Calu3 (cell line): ENCODE measurements at regions of chr10 and their contacts with region 1.

Region 1: DNA sequence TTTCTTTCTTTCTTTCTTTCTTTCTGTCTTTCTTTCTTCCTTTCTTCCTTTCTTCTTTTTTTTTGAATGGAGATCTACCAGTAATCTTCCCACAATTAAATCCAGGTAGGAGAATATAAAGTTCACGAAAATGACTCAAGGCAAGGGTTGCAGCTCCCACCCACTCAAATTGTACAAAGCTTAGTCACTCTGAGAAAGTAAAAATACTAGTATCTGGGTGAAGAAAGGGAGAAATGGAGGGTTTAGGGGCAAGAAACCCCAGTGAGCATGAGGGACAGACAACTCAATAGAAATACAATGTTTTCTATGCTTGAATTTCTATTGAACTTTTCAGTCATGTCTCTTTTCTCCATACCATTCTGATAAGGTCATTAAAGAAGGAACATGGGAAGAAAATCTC is 200.8 kb downstream of the GATA3 start:
- DNase-seq: no peak
- H3K4me3 Mint-ChIP-seq: no peak overlapping the region
- H3K27ac Mint-ChIP-seq: no peak overlapping the region
- H3K4me1 Mint-ChIP-seq: peaks cover 26% of the 10 kb centered on the region
- H3K27me3 Mint-ChIP-seq: no peaks in the 10 kb centered on the region
- CTCF ChIP-seq: no peak

Region 2: DNA sequence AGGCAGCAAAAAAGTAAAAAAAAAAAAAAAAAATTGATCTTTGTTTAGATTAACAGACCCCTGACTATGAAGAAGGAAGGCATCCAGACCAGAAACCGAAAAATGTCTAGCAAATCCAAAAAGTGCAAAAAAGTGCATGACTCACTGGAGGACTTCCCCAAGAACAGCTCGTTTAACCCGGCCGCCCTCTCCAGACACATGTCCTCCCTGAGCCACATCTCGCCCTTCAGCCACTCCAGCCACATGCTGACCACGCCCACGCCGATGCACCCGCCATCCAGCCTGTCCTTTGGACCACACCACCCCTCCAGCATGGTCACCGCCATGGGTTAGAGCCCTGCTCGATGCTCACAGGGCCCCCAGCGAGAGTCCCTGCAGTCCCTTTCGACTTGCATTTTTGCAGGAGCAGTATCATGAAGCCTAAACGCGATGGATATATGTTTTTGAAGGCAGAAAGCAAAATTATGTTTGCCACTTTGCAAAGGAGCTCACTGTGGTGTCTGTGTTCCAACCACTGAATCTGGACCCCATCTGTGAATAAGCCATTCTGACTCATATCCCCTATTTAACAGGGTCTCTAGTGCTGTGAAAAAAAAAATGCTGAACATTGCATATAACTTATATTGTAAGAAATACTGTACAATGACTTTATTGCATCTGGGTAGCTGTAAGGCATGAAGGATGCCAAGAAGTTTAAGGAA is 181.5 kb before region 1 on chr10:
- CTCF ChIA-PET with region 1: no interaction called
- intact Hi-C with region 1: no loop called
- DNase-seq: no peak
- H3K4me3 Mint-ChIP-seq: no peak overlapping the region
- H3K27ac Mint-ChIP-seq: no peak overlapping the region
- H3K4me1 Mint-ChIP-seq: no peaks in the 10 kb centered on the region
- H3K27me3 Mint-ChIP-seq: no peaks in the 10 kb centered on the region
- CTCF ChIP-seq: no peak

Region 3: GRCh38 chr10:8269976-8270375 is 14.7 kb after region 1 on chr10:
- CTCF ChIA-PET with region 1: interaction called, 14 read pairs
- intact Hi-C with region 1: no loop called
- DNase-seq: no peak
- H3K4me3 Mint-ChIP-seq: no peak overlapping the region
- H3K27ac Mint-ChIP-seq: no peak overlapping the region
- H3K4me1 Mint-ChIP-seq: no peaks in the 10 kb centered on the region
- H3K27me3 Mint-ChIP-seq: no peaks in the 10 kb centered on the region
- CTCF ChIP-seq: no peak

Region 4: GRCh38 chr10:8282340-8282739 is 27.0 kb after region 1 on chr10:
- CTCF ChIA-PET with region 1: no interaction called
- intact Hi-C with region 1: no loop called
- DNase-seq: no peak
- H3K4me3 Mint-ChIP-seq: no peak overlapping the region
- H3K27ac Mint-ChIP-seq: no peak overlapping the region
- H3K4me1 Mint-ChIP-seq: peaks cover 11% of the 10 kb centered on the region
- H3K27me3 Mint-ChIP-seq: no peaks in the 10 kb centered on the region
- CTCF ChIP-seq: no peak

Region 5: GRCh38 chr10:8312781-8313180 is 57.5 kb after region 1 on chr10:
- CTCF ChIA-PET with region 1: no interaction called
- intact Hi-C with region 1: no loop called
- DNase-seq: no peak
- H3K4me3 Mint-ChIP-seq: no peak overlapping the region
- H3K27ac Mint-ChIP-seq: no peak overlapping the region
- H3K4me1 Mint-ChIP-seq: peaks cover 11% of the 10 kb centered on the region
- H3K27me3 Mint-ChIP-seq: no peaks in the 10 kb centered on the region
- CTCF ChIP-seq: no peak